Transverse colon (tissue), 4 donors: ENCODE measurements at regions of chr15 and their contacts with region 1.

Region 1: GRCh38 chr15:26864664-26865191 is 2.1 kb upstream of the GABRA5 start:
- DNase-seq: no peak
- H3K4me3 ChIP-seq: no peak overlapping the region
- H3K27ac ChIP-seq: no peak overlapping the region
- H3K4me1 ChIP-seq: no peaks in the 10 kb centered on the region
- H3K27me3 ChIP-seq: peaks cover 37% of the 10 kb centered on the region
- CTCF ChIP-seq: peak in 4 of 5 experiments; percentile 14 to 19 (median 17)
- EP300 ChIP-seq: no peak
- POLR2A ChIP-seq: no peak

Region 2: GRCh38 chr15:26831951-26832350 is 32.8 kb before region 1 on chr15:
- in situ Hi-C with region 1: loop called in 1 of 4 experiments (anchors 5 kb)
- intact Hi-C with region 1: no loop called
- DNase-seq: no peak
- H3K4me3 ChIP-seq: no peak overlapping the region
- H3K27ac ChIP-seq: no peak overlapping the region
- H3K4me1 ChIP-seq: no peaks in the 10 kb centered on the region
- H3K27me3 ChIP-seq: no peaks in the 10 kb centered on the region
- CTCF ChIP-seq: no peak
- EP300 ChIP-seq: no peak
- POLR2A ChIP-seq: no peak

Region 3: GRCh38 chr15:26928051-26928450 is 63.3 kb after region 1 on chr15:
- in situ Hi-C with region 1: no loop called
- intact Hi-C with region 1: loop called (anchors 10 kb)
- DNase-seq: no peak
- H3K4me3 ChIP-seq: no peak overlapping the region
- H3K27ac ChIP-seq: no peak overlapping the region
- H3K4me1 ChIP-seq: no peaks in the 10 kb centered on the region
- H3K27me3 ChIP-seq: no peaks in the 10 kb centered on the region
- CTCF ChIP-seq: no peak
- EP300 ChIP-seq: no peak
- POLR2A ChIP-seq: no peak